ENCODE measurements at regions of chr6 and their contacts with region 1.

Region 1: DNA sequence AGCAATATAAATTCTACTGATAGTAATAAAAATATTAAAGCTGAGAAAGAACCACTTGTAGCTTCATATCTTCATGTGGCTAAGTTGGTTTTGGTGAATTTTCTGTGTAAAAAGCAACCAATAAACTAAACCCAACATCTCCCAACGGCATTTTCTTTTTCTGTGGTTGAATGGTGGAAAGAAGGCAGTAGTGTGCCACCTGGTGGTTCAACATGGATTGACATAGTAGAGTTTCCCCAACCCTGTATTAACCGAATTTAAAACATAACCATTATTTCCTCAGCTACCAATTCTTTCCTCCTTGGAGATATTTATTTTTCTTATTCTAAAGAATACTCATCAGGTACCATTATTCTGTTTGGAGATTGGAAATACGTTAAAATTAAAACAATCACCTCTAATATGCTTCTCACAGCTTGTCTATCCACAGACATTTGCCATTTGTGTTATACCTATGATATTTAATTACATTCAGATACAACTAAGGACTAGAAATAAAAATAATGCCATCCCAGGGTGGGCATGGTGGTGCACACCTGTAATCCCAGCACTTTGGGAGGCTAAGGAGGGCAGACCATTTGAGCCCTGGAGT is 117.1 kb upstream of the EEF1E1 start:
- DNase-seq: peak; percentile 60
- H3K4me3 ChIP-seq: peak overlapping the region in 1 of 2 experiments; percentile 31; a peak in 1 of 4 replicates
- H3K27ac ChIP-seq: no peak overlapping the region
- H3K4me1 ChIP-seq: no peaks in the 10 kb centered on the region
- H3K27me3 ChIP-seq: no peaks in the 10 kb centered on the region
- CTCF ChIP-seq: peak; percentile 84
- EP300 ChIP-seq: no peak
- RAD21 ChIP-seq: peak; percentile 81

Region 2: GRCh38 chr6:7865781-7866180 is 353.7 kb before region 1 on chr6:
- CTCF ChIA-PET with region 1: no interaction called
- POLR2A ChIA-PET with region 1: no interaction called
- DNase-seq: no peak
- H3K4me3 ChIP-seq: no peak overlapping the region
- H3K27ac ChIP-seq: no peak overlapping the region
- H3K4me1 ChIP-seq: no peaks in the 10 kb centered on the region
- H3K27me3 ChIP-seq: no peaks in the 10 kb centered on the region
- CTCF ChIP-seq: no peak
- EP300 ChIP-seq: no peak
- RAD21 ChIP-seq: no peak

Region 3: DNA sequence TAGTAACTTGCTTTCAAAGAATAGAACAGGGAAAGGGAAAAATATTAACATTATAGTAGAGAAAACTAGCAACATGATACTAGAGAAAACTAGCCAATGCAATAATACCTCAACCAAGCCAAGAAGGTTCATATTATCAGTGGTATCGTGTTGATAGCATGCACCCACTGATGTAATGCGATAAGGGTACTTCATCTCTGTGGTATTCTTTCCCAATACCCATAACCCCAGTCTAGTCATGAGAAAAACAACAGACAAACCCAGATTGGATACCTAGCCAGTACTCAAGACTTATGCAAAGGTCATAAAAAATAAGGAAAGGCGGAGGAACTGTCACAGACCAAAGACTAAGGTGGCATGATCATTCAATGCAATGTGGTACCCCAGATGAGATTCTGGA is 176.2 kb before region 1 on chr6:
- CTCF ChIA-PET with region 1: no interaction called
- POLR2A ChIA-PET with region 1: no interaction called
- DNase-seq: no peak
- H3K4me3 ChIP-seq: no peak overlapping the region
- H3K27ac ChIP-seq: no peak overlapping the region
- H3K4me1 ChIP-seq: no peaks in the 10 kb centered on the region
- H3K27me3 ChIP-seq: no peaks in the 10 kb centered on the region
- CTCF ChIP-seq: no peak
- EP300 ChIP-seq: no peak
- RAD21 ChIP-seq: no peak

Region 4: DNA sequence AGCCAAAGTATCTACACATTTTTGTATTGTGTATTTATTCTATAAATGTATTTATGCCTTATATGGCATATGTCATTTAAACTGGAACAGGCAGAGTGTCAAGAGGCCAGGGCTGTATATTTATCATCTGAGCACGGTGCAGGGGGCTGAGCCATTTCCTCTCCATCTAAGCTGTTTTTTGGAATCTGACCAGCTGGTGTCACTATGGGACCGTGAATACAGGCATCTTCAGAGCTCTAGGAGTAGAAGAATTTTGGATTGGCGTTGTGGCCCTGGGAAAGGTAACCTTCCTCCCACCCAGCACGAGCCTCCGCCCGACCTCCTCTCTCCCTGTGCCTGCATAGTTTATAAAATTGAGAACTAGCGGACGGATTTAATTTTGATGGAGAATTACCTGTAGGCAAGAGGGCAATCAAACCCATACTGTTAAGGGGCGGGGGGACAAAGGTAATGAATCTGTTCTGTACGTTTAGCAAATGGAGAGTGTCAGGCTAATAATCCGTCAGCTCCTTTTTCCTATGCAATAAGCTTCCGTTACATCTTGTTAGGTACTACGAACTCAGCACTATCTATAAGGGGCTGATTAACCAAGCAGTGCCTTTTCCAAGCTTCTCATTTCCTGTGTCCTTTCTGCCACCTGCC is 88.1 kb before region 1 on chr6:
- CTCF ChIA-PET with region 1: interaction called, 83 read pairs
- POLR2A ChIA-PET with region 1: no interaction called
- DNase-seq: peak; percentile 58
- H3K4me3 ChIP-seq: peak overlapping the region in 1 of 2 experiments; percentile 39; a peak in 1 of 4 replicates
- H3K27ac ChIP-seq: no peak overlapping the region
- H3K4me1 ChIP-seq: no peaks in the 10 kb centered on the region; a peak in 1 of 4 replicates
- H3K27me3 ChIP-seq: no peaks in the 10 kb centered on the region; the same call in 1 of the 2 replicates
- CTCF ChIP-seq: peak; percentile 75
- EP300 ChIP-seq: no peak
- RAD21 ChIP-seq: peak; percentile 92

Region 5: DNA sequence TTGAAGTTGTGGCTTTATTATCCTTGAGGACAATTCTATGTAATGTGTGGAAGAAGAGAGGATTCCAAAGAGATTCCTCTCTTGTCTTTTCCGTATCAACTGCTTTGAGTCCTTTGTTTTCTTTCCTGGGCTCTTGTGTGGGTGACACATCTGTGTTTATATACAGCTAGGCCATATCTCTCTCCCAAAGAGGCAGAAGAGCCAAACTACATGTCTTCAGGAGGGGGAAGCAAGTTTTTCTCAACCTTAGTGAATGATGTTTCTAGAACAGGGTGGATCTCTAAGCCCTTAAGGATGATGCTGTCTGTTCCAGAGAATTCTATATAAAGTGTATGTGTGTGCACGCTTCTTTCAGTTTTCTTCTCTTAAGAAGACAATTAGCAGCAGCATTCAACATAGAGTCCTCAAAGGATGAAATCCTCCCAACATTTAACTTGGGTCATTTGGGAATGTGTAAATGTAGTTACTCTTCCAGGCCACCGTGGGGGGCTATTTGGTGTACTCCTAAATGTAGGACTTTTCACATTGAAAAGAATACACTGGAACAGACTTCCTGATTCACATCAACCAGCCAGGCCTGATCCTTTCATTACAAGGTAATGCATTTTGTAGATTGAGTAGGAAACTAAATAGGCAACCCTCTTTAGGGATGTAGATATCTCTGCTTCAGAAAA is 24.3 kb before region 1 on chr6:
- CTCF ChIA-PET with region 1: interaction called, 12 read pairs
- POLR2A ChIA-PET with region 1: no interaction called
- DNase-seq: peak; percentile 49
- H3K4me3 ChIP-seq: no peak overlapping the region; a peak in 1 of 4 replicates
- H3K27ac ChIP-seq: no peak overlapping the region
- H3K4me1 ChIP-seq: no peaks in the 10 kb centered on the region
- H3K27me3 ChIP-seq: no peaks in the 10 kb centered on the region
- CTCF ChIP-seq: peak; percentile 42
- EP300 ChIP-seq: no peak
- RAD21 ChIP-seq: peak; percentile 45

Region 6: DNA sequence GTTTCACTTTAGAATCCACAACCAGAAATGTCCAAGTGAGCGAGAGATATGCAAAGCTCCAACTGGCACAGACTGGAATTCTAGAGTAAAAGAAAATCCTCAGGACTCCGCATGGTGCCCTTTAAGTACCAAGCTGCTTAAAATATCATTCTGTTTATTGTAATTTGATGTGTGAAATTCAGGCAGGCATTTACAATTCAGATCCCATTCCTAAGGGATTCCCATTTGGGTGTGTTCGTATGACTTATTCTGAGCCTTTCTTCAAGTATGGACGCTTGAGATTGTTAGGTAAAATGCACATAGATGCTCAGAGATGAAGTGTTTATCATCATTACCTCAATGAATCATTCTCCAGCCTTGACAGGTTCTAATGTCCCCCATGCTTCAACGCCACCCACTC is 17.8 kb before region 1 on chr6:
- CTCF ChIA-PET with region 1: interaction called, 48 read pairs
- POLR2A ChIA-PET with region 1: no interaction called
- DNase-seq: no peak
- H3K4me3 ChIP-seq: no peak overlapping the region
- H3K27ac ChIP-seq: no peak overlapping the region
- H3K4me1 ChIP-seq: no peaks in the 10 kb centered on the region; a peak in 1 of 4 replicates
- H3K27me3 ChIP-seq: no peaks in the 10 kb centered on the region; the same call in 1 of the 2 replicates
- CTCF ChIP-seq: no peak
- EP300 ChIP-seq: no peak
- RAD21 ChIP-seq: no peak

Region 7: DNA sequence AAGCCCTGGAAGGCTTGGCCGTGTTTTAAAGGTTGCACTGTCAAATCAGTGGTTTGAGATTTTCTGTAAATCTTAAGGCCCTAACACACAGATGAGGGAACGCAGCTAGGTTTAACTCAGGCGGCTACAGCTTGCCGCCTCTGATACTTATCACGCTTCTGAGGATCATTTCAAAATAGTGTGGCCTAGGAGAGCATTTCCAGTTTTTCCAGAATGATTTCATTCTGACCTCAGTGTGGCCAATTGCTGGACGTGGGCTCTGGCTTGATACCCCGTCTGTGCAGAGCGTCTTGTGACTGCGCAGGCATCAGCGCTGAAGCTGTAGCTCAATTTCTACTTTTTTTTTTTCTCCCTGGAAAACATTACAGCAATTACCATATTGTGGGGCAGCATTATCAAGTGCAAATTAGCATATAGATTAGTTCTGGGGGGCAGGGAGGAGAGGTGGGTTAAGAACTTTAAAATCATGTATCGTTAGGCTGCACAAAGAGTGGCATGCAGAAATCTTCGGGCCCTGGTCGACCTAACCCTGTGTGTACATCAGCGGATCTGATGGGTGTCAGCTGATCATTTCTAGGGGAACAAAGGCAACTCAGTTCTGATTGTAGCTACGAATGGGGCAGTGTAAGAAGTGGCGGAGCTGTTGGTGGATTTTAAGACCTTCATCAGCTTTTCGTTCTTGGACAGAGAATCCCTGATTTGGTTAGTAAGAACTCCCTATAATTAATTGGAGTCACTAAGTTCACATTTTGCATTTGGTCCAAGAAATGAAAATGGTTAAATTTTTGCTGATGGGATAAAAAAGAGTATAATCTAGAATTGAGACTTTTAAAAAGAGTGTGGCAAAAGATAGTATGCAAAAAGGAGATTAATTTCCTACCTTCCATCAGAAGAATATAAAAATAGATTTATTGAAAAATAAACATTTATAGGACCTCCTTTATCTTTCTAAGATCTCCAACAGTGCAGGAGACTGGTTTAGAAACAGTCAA is 12.0 kb before region 1 on chr6:
- CTCF ChIA-PET with region 1: interaction called, 48 read pairs
- POLR2A ChIA-PET with region 1: no interaction called
- DNase-seq: no peak
- H3K4me3 ChIP-seq: no peak overlapping the region
- H3K27ac ChIP-seq: no peak overlapping the region
- H3K4me1 ChIP-seq: no peaks in the 10 kb centered on the region; a peak in 1 of 4 replicates
- H3K27me3 ChIP-seq: no peaks in the 10 kb centered on the region; the same call in 1 of the 2 replicates
- CTCF ChIP-seq: no peak
- EP300 ChIP-seq: no peak
- RAD21 ChIP-seq: no peak

Region 8: DNA sequence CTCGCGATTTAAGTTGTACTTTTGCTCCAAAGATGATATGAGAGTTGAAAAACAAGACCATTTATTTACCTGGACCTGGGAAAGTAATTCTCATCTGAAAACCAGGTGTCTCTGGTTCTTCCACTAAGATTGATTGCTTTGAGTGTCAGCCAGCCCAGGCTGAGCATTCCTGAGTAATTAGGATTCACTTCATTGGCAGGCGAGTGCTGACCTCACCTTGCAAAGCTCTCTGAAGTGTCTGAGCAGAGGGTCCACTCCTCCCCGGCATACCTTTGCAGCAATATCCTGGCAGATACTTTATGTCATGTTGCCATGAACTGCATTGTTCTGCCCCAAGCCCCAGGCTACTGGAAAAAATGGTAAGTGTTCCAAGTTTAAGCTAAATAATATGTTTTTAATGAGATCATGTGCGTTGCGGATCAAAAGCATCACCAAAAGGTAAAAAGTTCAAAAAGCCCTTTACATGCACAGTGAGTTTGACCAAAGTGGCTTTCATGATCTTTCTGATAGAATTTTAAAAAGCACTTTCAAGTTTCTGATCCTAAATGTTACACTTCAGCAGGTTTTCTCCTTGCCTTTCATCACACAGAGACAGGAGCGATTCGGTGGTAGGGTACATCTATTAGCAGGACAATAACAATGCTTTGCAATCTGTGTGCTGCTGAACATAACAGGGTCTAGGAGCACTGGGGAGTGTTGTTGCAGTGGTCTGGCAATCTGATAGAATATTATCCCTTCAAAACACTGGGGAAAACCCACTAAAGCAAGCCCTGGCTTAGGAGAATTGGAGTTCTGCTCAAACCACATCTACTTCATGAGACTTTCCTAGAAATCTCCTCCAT is 10.7 kb after region 1 on chr6:
- CTCF ChIA-PET with region 1: interaction called, 26 read pairs
- POLR2A ChIA-PET with region 1: no interaction called
- DNase-seq: no peak
- H3K4me3 ChIP-seq: no peak overlapping the region
- H3K27ac ChIP-seq: no peak overlapping the region
- H3K4me1 ChIP-seq: peaks cover 0 to 2% of the 10 kb centered on the region in 2 experiments; a peak in 1 of 4 replicates
- H3K27me3 ChIP-seq: no peaks in the 10 kb centered on the region
- CTCF ChIP-seq: no peak
- EP300 ChIP-seq: no peak
- RAD21 ChIP-seq: no peak

Region 9: GRCh38 chr6:8277769-8278168 is 58.3 kb after region 1 on chr6:
- CTCF ChIA-PET with region 1: interaction called, 11 read pairs
- POLR2A ChIA-PET with region 1: no interaction called
- DNase-seq: peak; percentile 27
- H3K4me3 ChIP-seq: no peak overlapping the region
- H3K27ac ChIP-seq: peak overlapping the region in 1 of 2 experiments; percentile 72; a peak in 2 of 4 replicates
- H3K4me1 ChIP-seq: peaks cover 0 to 28% of the 10 kb centered on the region in 2 experiments; a peak in 2 of 4 replicates
- H3K27me3 ChIP-seq: no peaks in the 10 kb centered on the region
- CTCF ChIP-seq: no peak
- EP300 ChIP-seq: no peak
- RAD21 ChIP-seq: no peak